Head of caudate nucleus (tissue), 42 donors: ENCODE measurements at regions of chr7 and their contacts with region 1.

Region 1: DNA sequence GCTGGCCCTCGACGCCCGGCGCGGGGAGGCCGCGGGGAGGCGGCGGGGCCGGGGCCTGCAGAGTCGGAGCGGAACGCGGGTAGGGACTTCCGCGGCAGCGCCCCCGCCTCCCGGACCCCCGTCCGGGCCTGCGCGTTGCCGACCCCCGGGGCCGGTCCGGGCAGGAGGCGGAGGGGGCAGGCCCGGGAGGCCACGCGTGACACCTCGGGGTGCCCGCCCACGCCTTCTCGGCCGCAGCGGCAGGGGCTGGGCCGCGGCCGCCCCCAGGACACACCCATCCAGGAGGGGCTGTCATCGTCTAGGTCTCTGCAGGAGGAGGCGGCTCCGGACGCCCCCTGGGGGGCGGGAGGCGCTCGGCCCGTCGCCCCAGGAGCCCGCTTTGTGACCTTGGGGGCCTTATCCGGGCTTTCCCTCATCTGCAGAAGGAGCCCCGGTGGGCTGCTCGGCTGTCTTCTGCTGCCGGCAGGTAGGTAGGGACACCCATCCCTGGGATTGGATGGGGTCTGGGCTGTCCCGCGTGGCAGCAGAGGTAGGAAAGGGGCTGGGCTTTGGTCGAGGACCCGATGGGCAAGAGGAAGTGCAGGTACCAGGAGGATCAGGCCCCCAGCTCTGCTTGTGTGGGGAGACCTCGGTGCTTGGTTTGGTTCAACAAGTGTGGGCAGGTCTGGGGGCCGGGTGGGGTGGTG is 569 bp downstream of the ZNF316 start:
- DNase-seq: peak in 1 of 42 donors; percentile 18

Region 2: DNA sequence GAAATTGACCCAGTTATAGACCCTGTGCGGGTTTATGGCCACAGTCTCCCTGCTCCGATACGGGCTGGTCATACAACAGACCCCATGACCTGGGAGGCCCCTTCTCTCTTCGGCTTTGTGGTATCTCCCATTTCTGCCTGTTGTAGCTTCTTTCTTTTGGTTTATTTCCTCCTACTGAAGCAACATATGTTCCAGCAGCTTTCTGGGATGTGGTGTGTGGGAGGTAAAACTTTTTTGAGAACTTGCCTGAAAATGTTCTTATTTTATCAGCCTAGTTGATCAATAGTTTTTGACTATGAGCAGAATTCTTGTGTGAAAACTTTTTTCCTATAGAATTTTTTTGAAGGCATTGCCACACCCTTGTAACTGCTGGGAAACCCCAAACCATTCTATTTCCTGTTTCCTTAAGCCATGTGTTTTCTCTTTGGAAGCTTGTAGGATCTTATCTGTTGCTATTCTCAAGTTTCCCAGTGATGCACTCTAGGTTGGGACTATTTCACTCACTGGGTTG is 269.9 kb before region 1 on chr7:
- intact Hi-C with region 1: no loop called
- DNase-seq: no peak

Region 3: DNA sequence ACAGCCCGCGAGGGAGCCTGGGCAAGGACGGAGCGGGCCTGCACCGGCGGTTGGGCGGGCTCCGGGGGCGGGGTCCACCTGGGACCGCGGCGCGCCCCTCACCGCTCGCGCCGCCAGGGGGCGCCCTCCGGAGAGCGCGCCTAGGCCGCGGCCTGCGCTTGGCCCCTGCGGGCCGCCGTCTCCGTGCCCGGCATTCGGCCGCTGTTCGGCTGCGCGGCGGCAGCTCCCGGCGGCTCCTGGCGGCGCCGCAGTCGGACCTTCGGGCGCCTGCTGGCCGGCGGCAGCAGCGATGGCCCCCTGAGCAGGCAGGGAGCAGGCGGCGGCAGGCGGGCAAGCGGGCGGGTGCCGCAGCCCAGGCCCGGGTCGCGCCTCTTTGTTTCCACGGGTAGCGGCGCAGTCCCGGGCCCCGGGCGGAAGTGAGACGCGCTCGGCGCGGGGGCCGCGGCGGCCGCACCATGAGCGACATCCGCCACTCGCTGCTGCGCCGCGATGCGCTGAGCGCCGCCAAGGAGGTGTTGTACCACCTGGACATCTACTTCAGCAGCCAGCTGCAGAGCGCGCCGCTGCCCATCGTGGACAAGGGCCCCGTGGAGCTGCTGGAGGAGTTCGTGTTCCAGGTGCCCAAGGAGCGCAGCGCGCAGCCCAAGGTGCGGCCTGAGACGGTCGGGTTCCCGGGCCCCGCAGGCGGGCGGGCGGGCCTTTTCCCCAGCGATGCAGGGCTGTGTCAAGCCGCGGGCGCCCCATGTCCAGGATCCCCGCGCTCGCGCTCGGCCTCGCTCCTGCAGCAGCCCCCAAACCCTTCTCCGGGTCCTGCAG is 47.6 kb before region 1 on chr7 and contains the start of gene INTS15:
- intact Hi-C with region 1: loop called (anchors 5 kb)
- DNase-seq: peak; percentile 18 to 88 (median 73)

Region 4: GRCh38 chr7:6706677-6707544 is 69.2 kb after region 1 on chr7 and contains the start of gene ZNF12:
- intact Hi-C with region 1: loop called (anchors 10 kb)
- DNase-seq: peak; percentile 86 to 99 (median 96)